Colonic mucosa (tissue), 4 donors: ENCODE measurements at regions of chr19 and their contacts with region 1.

Region 1: DNA sequence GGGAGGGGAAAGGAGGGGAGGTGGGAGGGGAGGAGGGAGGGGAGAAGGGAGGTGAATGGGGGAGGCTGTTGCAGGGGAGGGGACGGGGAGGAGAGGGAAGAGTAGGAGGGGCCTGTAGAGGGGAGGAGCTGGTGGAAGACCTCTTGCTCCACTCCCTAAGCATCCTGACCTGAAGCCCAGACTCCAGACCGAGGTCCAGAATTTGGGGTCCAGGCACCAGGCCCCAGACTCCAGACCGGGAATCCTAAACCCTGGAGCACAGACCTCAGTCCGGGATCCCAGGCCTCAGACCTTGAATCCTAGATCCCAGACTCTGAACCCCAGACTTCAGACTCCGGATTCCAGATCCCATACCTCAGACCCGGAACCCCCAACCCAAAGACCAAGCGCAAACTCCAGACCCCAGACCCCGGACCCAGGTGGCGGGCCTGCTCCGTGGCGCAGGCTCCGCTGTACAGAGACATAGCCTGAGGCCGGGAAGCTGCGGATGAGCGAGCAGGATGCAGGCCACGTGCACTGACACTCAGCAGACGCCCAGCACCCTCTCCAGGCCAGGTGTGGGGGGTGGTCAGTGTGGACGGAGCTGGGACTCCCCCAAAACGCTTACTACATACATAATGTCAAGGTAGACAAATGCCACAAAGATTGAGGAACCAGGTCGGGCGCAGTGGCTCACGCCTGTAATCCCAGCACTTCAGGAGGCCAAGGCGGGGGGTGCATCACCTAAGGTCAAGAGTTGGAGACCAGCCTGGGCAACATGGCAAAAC is 710 bp upstream of the BTBD2 start:
- DNase-seq: peak; percentile 85
- H3K4me3 ChIP-seq: peak overlapping the region; percentile 12
- H3K27ac ChIP-seq: no peak overlapping the region
- H3K4me1 ChIP-seq: no peaks in the 10 kb centered on the region
- H3K27me3 ChIP-seq: no peaks in the 10 kb centered on the region
- CTCF ChIP-seq: no peak

Region 2: DNA sequence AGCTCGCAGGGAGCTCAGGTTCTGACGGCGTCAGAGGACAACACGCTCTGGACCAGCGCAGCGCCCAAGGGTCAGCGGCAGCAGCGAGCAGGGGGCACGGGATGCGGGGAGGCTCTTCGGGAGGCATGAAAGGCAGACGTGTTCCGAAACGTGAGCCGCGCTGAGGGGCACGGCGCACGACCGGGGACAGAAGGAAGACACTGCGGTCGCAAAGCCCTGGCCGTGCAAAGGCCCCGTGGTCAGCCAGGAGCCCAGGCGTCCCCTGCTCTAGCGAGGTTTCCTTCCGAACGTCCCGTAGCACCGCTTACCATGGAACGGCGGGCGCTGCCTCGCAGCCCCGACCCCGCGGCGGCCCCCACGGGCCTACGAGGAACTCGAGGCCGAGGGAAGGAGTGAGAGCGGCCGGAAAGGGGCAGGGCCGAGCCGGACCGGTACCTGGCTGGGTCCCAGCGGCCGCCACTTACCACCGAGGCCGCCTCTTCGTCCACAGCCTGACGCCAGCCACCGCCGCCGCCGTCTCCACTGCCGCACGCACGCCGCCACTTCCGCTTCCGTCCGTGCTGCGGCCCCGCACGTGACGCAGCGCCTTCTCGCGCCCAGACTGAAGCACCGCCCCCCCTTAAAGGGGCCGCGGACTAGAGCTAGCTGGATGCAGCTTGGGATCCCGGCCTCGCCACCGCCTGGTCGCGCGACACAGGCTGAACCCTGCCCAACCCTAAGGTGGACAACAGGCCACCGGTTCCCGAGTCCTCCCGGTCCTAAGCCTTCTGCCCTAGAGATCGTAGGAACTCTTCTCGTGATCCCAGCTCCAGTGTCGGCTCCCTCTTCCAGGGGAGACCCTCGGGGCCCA is 140.4 kb before region 1 on chr19:
- intact Hi-C with region 1: no loop called
- DNase-seq: peak; percentile 95
- H3K4me3 ChIP-seq: peak overlapping the region; percentile 98
- H3K27ac ChIP-seq: peak overlapping the region; percentile 92
- H3K4me1 ChIP-seq: peaks cover 8% of the 10 kb centered on the region
- H3K27me3 ChIP-seq: no peaks in the 10 kb centered on the region
- CTCF ChIP-seq: no peak

Region 3: GRCh38 chr19:1935484-1936208 is 80.6 kb before region 1 on chr19:
- intact Hi-C with region 1: loop called (anchors 10 kb)
- DNase-seq: no peak
- H3K4me3 ChIP-seq: no peak overlapping the region
- H3K27ac ChIP-seq: no peak overlapping the region
- H3K4me1 ChIP-seq: peaks cover 4% of the 10 kb centered on the region
- H3K27me3 ChIP-seq: no peaks in the 10 kb centered on the region
- CTCF ChIP-seq: no peak

Region 4: GRCh38 chr19:2064788-2065524 is 48.7 kb after region 1 on chr19:
- intact Hi-C with region 1: loop called (anchors 1 kb)
- DNase-seq: peak; percentile 47
- H3K4me3 ChIP-seq: no peak overlapping the region
- H3K27ac ChIP-seq: peak overlapping the region; percentile 67
- H3K4me1 ChIP-seq: peaks cover 19% of the 10 kb centered on the region
- H3K27me3 ChIP-seq: no peaks in the 10 kb centered on the region
- CTCF ChIP-seq: no peak

Region 5: GRCh38 chr19:2135474-2136402 is 119.5 kb after region 1 on chr19:
- intact Hi-C with region 1: no loop called
- DNase-seq: no peak
- H3K4me3 ChIP-seq: no peak overlapping the region
- H3K27ac ChIP-seq: no peak overlapping the region
- H3K4me1 ChIP-seq: no peaks in the 10 kb centered on the region
- H3K27me3 ChIP-seq: no peaks in the 10 kb centered on the region
- CTCF ChIP-seq: no peak

Region 6: DNA sequence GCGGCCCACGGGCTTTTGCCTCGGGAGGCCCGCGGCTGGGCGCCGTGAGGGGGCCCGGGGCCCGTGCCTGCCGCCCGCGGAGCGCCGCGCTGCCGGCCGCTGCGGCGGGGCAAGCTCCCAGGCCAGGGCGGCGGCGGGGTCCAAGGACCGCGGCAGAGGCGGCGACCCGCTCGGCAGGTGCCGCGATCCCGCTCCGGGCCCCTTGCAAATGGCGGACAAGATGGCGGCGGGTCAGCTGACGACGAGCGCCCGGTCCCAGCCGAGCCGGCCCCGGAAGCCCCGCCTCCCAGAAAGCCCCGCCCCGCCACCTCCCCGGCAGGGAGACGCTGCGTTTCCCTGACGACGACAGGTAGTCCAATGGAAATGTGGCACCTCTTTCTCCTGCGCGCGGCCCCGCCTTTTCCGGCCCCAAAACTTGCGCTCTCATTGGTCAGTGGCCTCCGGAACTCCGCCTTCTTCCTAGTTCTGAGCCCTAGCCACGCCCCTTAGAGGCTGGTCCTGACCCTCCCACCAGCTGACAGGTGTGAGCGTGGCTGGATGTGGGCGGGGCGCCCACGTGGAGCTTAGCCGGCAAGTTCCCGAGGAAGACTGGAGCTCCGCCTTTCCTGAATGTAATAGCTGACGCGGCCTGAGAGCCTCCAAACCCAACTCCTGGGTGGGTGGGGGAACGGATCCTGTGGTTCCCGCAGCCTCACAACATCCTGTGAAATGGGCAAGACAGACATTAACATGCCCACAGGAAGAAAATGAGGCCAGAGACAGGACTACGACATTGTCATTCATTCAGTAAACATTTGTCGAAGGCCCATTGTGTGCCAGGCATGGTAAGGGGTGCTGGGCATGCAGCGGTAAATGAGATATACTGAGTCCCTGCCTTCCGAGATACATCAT is 135.4 kb after region 1 on chr19 and contains the start of gene AP3D1:
- intact Hi-C with region 1: loop called (anchors 5 kb)
- DNase-seq: peak; percentile 100
- H3K4me3 ChIP-seq: peak within 1 kb of the TSS; percentile 97
- H3K27ac ChIP-seq: peak within 1 kb of the TSS; percentile 79
- H3K4me1 ChIP-seq: peaks cover 12% of the 10 kb centered on the region
- H3K27me3 ChIP-seq: no peaks in the 10 kb centered on the region
- CTCF ChIP-seq: no peak
- total RNA-seq, gene AP3D1: 105 to 137 TPM